ENCODE measurements at regions of chr7 and their contacts with region 1.

Region 1: GRCh38 chr7:23679898-23680413 is at the start of gene FAM221A:
- DNase-seq: peak; percentile 81 to 83
- ATAC-seq: peak; percentile 94 to 96
- H3K4me3 ChIP-seq: peak within 1 kb of the TSS; percentile 61 to 94 (median 90)
- H3K27ac ChIP-seq: peak within 1 kb of the TSS; percentile 73 to 87 (median 84)
- H3K4me1 ChIP-seq: peaks cover 4 to 8% of the 10 kb centered on the region in 2 donors
- H3K27me3 ChIP-seq: no peaks in the 10 kb centered on the region
- CTCF ChIP-seq: peak; percentile 28 to 88 (median 51)
- POLR2A ChIP-seq: no peak
- total RNA-seq, gene FAM221A: 2.2 to 3.8 (median 2.5) TPM

Region 2: GRCh38 chr7:23597094-23598091 is 82.6 kb before region 1 on chr7 and contains the start of gene CCDC126:
- in situ Hi-C with region 1: no loop called
- intact Hi-C with region 1: loop called (anchors 1 kb)
- DNase-seq: peak; percentile 86 to 87
- ATAC-seq: peak; percentile 97 to 98
- H3K4me3 ChIP-seq: peak within 1 kb of the TSS; percentile 69 to 90 (median 74)
- H3K27ac ChIP-seq: peak within 1 kb of the TSS; percentile 91 to 97 (median 96)
- H3K4me1 ChIP-seq: peaks cover 20 to 33% of the 10 kb centered on the region in 2 donors
- H3K27me3 ChIP-seq: no peaks in the 10 kb centered on the region
- CTCF ChIP-seq: no peak
- POLR2A ChIP-seq: peak; percentile 61 to 81
- total RNA-seq, gene CCDC126: 12.0 to 23.1 (median 20.2) TPM

Region 3: DNA sequence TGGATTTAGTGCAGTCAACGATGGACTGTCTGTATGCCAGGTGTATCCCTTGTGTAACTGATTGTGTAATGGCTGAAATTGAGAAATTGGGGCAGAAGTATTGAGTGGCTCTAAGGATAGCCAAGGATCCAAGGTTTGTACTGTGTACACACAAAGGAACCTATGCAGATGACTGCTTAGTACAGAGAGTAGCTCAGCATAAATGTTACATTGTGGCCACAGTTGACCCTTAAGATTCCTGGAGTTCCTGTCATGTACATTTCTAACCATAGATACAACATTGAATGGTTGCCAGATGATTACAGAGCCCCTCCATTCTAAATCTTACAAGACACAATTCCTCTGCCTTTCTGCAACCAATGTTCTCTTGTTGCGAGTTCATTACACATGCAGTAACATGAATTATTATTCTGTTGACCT is 57.4 kb before region 1 on chr7:
- in situ Hi-C with region 1: no loop called
- intact Hi-C with region 1: loop called (anchors 10 kb)
- DNase-seq: peak in 1 of 2 donors; percentile 13
- ATAC-seq: peak; percentile 95 to 97
- H3K4me3 ChIP-seq: no peak overlapping the region
- H3K27ac ChIP-seq: peak overlapping the region in 2 of 4 donors; percentile 53 to 64
- H3K4me1 ChIP-seq: peaks cover 0 to 3% of the 10 kb centered on the region in 2 donors
- H3K27me3 ChIP-seq: no peaks in the 10 kb centered on the region
- CTCF ChIP-seq: no peak
- POLR2A ChIP-seq: no peak

Region 4: DNA sequence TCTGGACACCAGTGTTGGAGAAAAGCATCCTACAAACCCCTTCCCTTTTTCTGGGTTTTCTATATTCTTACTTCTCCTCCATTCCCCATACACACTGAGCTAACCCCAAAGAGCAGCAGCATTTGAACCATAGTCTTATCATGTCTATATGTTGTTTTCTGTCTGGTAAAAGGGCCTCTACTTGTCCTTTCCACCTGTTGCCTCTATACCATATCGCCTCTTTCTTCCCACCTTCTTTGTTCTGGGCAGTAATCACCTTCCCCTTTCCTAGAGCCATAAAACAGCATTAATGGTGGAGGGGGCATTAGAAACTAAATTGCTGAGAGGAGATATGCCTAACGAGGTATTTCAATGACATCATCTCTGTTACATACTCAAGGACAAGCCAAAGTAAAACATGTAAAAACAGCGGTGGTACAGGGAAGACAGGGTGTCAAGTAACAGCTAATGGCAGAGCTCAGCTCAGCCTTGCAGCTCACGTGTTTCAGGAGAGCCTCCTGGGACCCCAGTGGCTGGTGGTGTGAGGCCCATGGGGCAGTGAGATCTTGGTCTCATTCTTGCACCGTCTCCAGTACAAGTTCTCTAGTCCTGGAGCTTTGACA is 624.6 kb after region 1 on chr7:
- in situ Hi-C with region 1: no loop called
- intact Hi-C with region 1: no loop called
- DNase-seq: no peak
- ATAC-seq: no peak
- H3K4me3 ChIP-seq: no peak overlapping the region
- H3K27ac ChIP-seq: no peak overlapping the region
- H3K4me1 ChIP-seq: no peaks in the 10 kb centered on the region
- H3K27me3 ChIP-seq: no peaks in the 10 kb centered on the region
- CTCF ChIP-seq: no peak
- POLR2A ChIP-seq: no peak

Measured in gastrocnemius medialis (tissue), 4 donors.